Activated T-helper 1 cell treated with anti-CD3 and anti-CD28 coated beads, Interleukin-12 subunit alpha, Interleukin-12 subunit beta, Interleukin-2, Interleukin-4 antibody, amounts not matched to agents 30 ng/mL and 10 ng/mL and 1 ng/mL, durations not matched to agents 14 hours and 24 hours and 36 hours (primary cell): ENCODE measurements at regions of chr1 and their contacts with region 1.

Region 1: GRCh38 chr1:179954493-179955297 is at the start of gene CEP350:
- DNase-seq: peak; percentile 96
- H3K4me3 Mint-ChIP-seq: peak within 1 kb of the TSS; percentile 94
- H3K27ac Mint-ChIP-seq: peak within 1 kb of the TSS; percentile 94
- H3K4me1 Mint-ChIP-seq: peaks cover 50% of the 10 kb centered on the region
- H3K27me3 Mint-ChIP-seq: no peaks in the 10 kb centered on the region
- total RNA-seq, gene CEP350: 44.6 and 51.6 TPM in 2 replicates

Region 2: DNA sequence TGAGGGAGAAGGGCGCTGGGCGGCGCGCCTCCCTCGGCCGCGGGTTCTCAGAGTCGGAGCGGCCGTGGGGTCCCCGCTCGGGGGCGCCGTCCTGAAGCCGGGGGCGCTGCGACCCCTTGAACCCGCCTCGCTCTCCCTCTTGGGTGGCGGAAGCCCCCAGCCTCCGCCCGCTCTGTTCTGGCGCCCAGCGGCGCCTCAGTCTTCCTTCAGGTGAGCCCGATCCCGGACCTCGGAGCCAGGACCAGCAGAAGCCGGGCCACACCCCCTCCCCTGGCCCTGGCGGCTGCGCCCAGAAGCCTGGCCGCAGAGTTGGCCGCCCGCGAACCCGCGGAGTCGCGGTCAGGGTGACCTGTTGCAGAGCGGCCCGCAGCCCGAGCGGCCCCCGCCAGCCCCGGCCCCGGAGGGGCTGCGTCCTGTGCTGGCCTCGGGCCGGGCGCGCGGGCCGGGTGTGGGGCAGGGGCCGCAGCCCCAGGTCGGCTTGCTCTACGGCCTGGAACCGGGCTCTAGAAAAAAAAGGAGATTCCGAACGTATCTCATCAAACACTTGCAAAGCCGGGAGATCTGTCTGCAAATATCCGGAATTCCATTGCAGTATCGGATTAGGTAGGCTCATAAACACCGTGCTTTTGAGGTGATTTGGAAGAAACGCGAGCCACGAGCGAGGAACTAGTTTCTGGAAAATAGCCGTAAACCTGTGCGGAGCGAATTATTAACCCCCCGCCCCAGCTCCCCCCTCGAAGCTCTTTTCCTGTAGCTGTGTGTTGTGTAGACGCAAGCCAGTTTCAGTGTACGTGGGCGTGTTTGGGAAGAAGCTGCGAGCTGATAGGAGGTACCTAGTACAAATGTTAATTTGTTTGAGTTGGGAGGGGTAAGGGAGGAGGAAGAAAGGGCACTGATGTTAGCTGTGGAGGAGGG is 1228.8 kb before region 1 on chr1:
- intact Hi-C with region 1: loop called (anchors 10 kb)
- DNase-seq: peak; percentile 35
- H3K4me3 Mint-ChIP-seq: peak overlapping the region; percentile 84
- H3K27ac Mint-ChIP-seq: peak overlapping the region; percentile 43
- H3K4me1 Mint-ChIP-seq: peaks cover 10% of the 10 kb centered on the region
- H3K27me3 Mint-ChIP-seq: peaks cover 31% of the 10 kb centered on the region

Region 3: GRCh38 chr1:179298952-179299351 is 655.7 kb before region 1 on chr1:
- intact Hi-C with region 1: loop called (anchors 5 kb)
- DNase-seq: peak; percentile 51
- H3K4me3 Mint-ChIP-seq: peak overlapping the region; percentile 6
- H3K27ac Mint-ChIP-seq: peak overlapping the region; percentile 49
- H3K4me1 Mint-ChIP-seq: peaks cover 67% of the 10 kb centered on the region
- H3K27me3 Mint-ChIP-seq: no peaks in the 10 kb centered on the region

Region 4: GRCh38 chr1:179917601-179918429 is 36.9 kb before region 1 on chr1:
- intact Hi-C with region 1: loop called (anchors 2 kb)
- DNase-seq: no peak
- H3K4me3 Mint-ChIP-seq: no peak overlapping the region
- H3K27ac Mint-ChIP-seq: no peak overlapping the region
- H3K4me1 Mint-ChIP-seq: peaks cover 10% of the 10 kb centered on the region
- H3K27me3 Mint-ChIP-seq: no peaks in the 10 kb centered on the region

Region 5: DNA sequence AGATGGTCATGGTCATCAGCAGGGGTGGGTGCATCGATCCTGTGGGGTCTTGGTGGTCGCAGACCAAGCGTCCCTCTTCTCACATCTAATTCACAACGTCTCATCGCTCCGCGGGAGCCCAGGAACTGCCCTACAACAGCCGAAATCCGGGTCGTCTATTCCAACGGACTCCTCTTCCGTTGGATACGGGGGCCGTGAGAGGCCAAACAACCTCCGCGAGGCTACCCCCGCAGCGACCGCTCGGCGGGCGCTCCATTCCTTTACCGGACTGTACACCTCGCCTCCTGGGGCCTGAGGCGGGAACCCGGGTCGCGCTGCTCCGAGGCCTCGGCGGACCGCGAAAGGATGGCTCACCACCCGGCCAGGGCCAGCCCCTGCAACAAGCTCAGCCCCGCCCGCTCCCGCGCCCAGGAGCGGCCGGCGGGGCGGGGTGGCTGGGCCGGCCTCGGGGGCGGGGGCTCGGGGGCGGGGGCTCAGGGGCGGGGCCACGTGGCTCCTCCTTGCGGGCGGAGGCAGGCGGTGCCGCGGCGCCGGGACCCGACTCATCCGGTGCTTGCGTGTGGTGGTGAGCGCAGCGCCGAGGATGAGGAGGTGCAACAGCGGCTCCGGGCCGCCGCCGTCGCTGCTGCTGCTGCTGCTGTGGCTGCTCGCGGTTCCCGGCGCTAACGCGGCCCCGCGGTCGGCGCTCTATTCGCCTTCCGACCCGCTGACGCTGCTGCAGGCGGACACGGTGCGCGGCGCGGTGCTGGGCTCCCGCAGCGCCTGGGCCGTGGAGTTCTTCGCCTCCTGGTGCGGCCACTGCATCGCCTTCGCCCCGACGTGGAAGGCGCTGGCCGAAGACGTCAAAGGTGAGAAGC is 199.9 kb after region 1 on chr1 and contains the start of gene QSOX1:
- intact Hi-C with region 1: loop called (anchors 1 kb)
- DNase-seq: peak; percentile 85
- H3K4me3 Mint-ChIP-seq: peak within 1 kb of the TSS; percentile 88
- H3K27ac Mint-ChIP-seq: peak within 1 kb of the TSS; percentile 94
- H3K4me1 Mint-ChIP-seq: peaks cover 44% of the 10 kb centered on the region
- H3K27me3 Mint-ChIP-seq: peaks cover 4% of the 10 kb centered on the region
- total RNA-seq, gene QSOX1: 61.4 and 63.7 TPM in 2 replicates

Region 6: GRCh38 chr1:180502360-180503273 is 547.9 kb after region 1 on chr1 and contains the start of gene ACBD6:
- intact Hi-C with region 1: loop called (anchors 10 kb)
- DNase-seq: peak; percentile 81
- H3K4me3 Mint-ChIP-seq: peak within 1 kb of the TSS; percentile 97
- H3K27ac Mint-ChIP-seq: peak within 1 kb of the TSS; percentile 97
- H3K4me1 Mint-ChIP-seq: peaks cover 25% of the 10 kb centered on the region
- H3K27me3 Mint-ChIP-seq: peaks cover 3% of the 10 kb centered on the region
- total RNA-seq, gene ACBD6: 49.4 and 50.9 TPM in 2 replicates